ENCODE measurements at regions of chr11 and their contacts with region 1.

Region 1: GRCh38 chr11:128884703-128885338 is 6.3 kb upstream of the KCNJ5 start:
- DNase-seq: peak; percentile 74
- CTCF ChIP-seq: peak; percentile 74

Region 2: DNA sequence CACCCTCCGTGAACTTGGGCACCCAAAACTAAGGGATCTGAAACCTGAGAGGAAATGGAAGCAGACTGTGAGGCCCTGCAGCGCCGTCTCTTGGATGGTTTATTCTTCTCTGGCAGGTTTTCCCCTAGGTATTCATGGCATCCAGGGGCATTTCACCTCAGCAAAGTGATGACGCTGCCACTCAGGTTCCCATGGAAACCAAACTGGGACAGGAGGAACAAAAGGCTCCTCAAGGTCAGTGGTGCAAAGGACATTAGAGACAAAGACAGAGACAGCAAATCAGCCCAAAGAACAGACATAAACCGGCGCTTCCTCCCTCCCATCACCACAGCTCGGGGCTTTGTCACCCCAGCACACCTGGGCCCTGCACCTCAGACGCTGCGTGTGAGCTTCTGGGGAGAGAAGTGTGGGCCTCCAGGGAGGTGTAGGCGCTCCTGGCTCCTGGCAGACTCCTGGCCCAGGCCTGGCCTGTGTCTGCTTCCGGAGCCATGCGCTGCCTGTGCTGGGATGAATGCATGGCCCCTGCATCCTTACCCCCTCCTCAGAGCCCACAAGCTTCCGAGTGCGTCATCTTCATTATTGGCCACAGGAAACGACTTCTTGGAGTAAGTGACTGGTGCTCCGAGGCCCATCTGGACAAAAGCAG is 51.9 kb after region 1 on chr11:
- in situ Hi-C with region 1: no loop called
- DNase-seq: no peak
- CTCF ChIP-seq: no peak

Region 3: DNA sequence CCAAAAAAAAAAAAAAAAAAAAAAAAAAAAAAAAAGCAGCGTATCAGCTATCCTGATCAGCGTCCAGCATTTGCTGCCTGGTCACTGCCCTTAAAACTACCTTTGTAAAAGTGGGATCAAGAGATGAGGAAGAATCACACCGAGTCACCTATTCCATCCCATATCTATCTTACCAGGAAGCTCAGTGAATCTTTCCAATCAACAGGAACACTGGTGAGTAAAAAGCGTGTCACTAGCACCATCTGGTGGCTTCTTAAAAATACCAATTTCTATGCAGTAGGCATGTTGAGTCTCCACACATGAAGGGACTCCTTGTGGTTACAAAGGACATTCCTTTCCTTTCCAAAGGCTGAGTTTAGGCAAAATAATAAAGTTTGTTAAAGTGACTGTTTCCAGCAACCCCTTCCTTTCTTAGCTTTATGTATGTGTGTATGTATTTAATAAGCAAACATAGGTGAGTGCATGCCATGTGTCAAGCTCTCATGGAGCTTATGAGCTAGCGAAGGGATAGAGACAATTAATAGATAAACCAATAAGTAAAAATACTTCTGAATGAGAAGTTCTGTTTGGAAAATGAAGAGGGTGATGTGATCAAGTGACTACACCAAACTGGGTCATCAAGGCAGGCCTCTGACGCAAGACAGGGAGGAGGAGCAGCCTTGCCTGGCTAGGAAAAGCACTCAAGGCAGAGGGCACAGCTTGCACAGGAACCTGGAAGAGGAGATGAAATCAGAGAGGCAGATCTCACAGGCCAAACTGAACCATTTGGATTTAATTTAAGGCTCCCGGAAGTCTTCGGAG is 71.8 kb after region 1 on chr11:
- in situ Hi-C with region 1: loop called (anchors 10 kb)
- DNase-seq: peak; percentile 58
- CTCF ChIP-seq: peak; percentile 54

Region 4: DNA sequence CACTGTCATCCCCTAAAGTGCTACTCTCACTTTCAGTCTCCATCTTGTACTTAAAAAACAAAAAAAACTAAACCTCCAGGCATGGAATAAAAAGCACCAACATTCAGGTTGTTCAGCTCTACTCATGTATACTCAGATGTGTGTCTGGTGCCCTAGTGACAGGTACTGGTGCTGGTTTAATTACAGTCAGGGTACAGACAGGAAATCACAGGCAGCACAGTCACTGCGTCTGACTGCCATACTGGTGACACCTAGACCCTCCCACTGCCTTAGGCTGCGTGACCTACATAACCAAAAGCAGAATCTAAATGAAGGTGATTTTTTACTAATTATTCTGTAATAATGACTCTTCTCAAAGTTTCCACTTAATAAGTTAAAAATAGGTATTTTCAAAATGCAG is 307.3 kb after region 1 on chr11 and contains the start of gene ARHGAP32:
- in situ Hi-C with region 1: no loop called
- DNase-seq: no peak
- CTCF ChIP-seq: no peak

Region 5: GRCh38 chr11:129279326-129280026 is 394.7 kb after region 1 on chr11:
- in situ Hi-C with region 1: no loop called
- DNase-seq: peak; percentile 49
- CTCF ChIP-seq: no peak